ENCODE measurements at regions of chr20 and their contacts with region 1.

Region 1: DNA sequence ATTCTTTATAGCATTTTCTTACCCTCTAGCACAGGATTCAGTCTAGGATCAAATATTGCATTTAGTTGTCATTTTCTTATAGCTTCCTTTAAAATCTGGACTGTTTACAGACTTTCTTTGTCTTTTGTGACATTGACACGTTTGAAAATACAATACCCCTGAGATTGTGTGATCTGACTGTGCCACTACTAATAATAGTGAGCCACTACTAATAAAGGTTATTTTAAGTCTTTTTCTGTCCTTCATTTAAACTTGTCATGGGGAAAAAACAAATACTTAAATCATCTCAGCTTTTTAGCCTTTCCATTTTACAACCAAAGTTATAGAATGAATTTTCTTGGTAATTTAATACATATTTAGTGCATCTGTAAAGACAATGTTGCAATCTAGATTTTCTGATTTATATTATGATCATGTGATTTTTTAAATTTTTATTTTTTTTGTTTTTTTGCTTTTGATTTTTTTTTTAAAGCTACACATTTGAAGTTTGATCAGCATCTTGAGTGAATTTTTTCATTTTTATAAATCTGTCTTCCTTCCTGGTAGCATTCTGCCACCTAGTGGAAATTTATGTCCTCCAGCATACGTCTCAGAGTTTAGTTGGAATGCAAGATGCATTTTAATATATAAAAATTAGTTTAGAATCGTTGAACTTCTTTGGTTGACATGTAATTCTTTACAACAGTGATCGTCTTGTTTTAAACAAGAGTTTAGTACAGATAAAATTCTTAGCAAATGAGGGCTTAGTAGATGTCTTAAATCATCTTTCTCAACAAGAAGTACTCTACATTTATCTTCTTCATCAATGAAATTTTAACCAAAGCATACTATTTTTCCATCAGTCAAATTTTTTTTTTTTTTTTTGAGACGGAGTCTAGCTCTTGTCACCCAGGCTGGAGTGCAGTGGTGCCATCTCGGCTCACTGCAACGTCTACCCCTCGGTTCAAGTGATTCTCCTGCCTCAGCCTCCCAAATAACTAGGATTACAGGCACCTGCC is 119.4 kb downstream of the NCOA3 start:
- DNase-seq: peak; percentile 36
- H3K4me3 ChIP-seq: no peak overlapping the region
- H3K27ac ChIP-seq: no peak overlapping the region
- H3K4me1 ChIP-seq: no peaks in the 10 kb centered on the region
- H3K27me3 ChIP-seq: no peaks in the 10 kb centered on the region
- CTCF ChIP-seq: peak; percentile 78 to 85

Region 2: GRCh38 chr20:45993197-45993951 is 1627.7 kb before region 1 on chr20:
- CTCF ChIA-PET with region 1: no interaction called
- dilution Hi-C with region 1: no loop called
- in situ Hi-C with region 1: no loop called
- intact Hi-C with region 1: no loop called
- DNase-seq: peak; percentile 99
- H3K4me3 ChIP-seq: no peak overlapping the region
- H3K27ac ChIP-seq: peak overlapping the region; percentile 58
- H3K4me1 ChIP-seq: peaks cover 17% of the 10 kb centered on the region
- H3K27me3 ChIP-seq: no peaks in the 10 kb centered on the region
- CTCF ChIP-seq: no peak

Region 3: GRCh38 chr20:46752728-46753127 is 868.4 kb before region 1 on chr20:
- CTCF ChIA-PET with region 1: interaction called, 3 read pairs
- dilution Hi-C with region 1: no loop called
- in situ Hi-C with region 1: loop called (anchors 25 kb)
- intact Hi-C with region 1: loop called (anchors 1 kb)
- DNase-seq: peak; percentile 16
- H3K4me3 ChIP-seq: no peak overlapping the region
- H3K27ac ChIP-seq: no peak overlapping the region
- H3K4me1 ChIP-seq: peaks cover under 1% of the 10 kb centered on the region
- H3K27me3 ChIP-seq: no peaks in the 10 kb centered on the region
- CTCF ChIP-seq: peak; percentile 69 to 78

Region 4: DNA sequence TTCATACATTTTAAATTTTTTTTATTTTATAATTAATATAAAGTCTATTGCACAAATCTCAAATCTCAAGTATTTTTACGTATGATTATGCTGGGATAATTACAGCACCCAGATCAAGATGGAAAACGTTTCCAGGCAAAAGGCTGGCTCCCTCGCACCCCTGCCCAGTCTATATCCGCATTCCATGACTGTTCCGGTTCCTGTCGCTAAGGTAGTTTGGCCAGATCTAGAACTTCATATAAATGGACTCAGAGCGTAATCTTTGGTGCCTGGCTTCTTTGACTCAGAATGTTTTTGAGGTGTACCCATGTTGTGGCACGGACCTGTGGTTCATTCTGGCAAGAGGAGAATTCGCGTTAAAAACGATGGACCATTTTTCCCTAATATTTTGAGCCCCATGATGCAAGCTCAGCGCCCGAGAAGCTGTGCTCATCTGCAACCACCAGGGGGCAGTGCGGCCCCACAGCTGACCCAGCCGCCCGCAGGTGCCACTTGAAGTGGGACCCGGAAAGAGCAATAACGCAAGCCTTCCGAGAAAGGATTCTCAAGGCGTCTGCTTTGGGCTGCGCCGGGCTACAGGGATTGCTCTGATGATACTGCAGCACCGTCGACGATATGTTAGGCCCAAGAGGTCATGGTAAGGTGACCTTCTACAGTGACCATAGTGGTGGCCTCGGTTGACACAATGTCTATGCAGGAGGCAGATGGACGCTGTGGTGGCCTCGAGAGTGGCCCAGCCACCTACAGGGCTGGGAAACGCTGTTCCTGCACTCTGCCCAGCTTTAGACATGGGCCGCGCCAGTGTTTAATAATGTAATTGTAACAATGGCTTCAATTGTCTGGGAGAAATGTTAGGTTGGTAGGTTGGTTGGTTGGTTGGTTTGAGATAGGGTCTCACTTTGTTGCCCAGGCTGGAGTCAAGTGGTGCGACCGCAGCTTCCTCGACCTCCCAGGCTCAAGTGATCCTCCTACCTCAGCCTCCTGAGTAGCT is 424.7 kb before region 1 on chr20:
- CTCF ChIA-PET with region 1: no interaction called
- dilution Hi-C with region 1: no loop called
- in situ Hi-C with region 1: no loop called
- intact Hi-C with region 1: loop called (anchors 2 kb)
- DNase-seq: peak; percentile 47
- H3K4me3 ChIP-seq: no peak overlapping the region
- H3K27ac ChIP-seq: no peak overlapping the region
- H3K4me1 ChIP-seq: peaks cover 10% of the 10 kb centered on the region
- H3K27me3 ChIP-seq: no peaks in the 10 kb centered on the region
- CTCF ChIP-seq: peak; percentile 86 to 96

Region 5: DNA sequence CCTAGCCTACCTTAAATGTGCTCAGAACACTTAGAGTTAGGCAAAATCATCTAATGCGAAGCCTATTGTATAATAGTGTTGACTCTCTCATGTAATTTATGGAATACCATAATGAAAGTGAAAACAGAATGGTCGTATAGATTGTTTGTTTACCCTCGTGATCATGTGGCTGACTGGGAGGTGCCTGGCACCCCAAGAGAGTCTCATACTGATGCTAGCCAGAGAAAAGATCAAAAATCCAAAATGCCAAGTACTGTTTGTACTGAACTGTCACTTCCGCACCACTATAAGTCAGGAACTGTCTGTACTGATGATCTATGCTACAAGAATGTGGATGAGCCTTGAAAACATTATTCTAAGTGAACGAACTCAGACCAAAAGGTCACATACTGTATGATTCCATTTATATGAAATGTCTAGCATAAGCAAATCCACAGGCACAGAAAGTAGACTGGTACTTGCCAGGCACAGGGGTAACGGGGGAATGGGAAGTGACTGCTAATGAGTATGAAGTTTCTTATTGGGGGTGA is 287.0 kb before region 1 on chr20:
- CTCF ChIA-PET with region 1: no interaction called
- dilution Hi-C with region 1: no loop called
- in situ Hi-C with region 1: no loop called
- intact Hi-C with region 1: no loop called
- DNase-seq: peak; percentile 94
- H3K4me3 ChIP-seq: peak overlapping the region in 1 of 3 experiments; percentile 41
- H3K27ac ChIP-seq: peak overlapping the region; percentile 81
- H3K4me1 ChIP-seq: peaks cover 68% of the 10 kb centered on the region
- H3K27me3 ChIP-seq: no peaks in the 10 kb centered on the region
- CTCF ChIP-seq: no peak

Region 6: GRCh38 chr20:47392015-47392720 is 228.9 kb before region 1 on chr20:
- CTCF ChIA-PET with region 1: no interaction called
- dilution Hi-C with region 1: no loop called
- in situ Hi-C with region 1: loop called (anchors 10 to 25 kb)
- intact Hi-C with region 1: no loop called
- DNase-seq: peak; percentile 97
- H3K4me3 ChIP-seq: no peak overlapping the region
- H3K27ac ChIP-seq: peak overlapping the region; percentile 99
- H3K4me1 ChIP-seq: peaks cover 21% of the 10 kb centered on the region
- H3K27me3 ChIP-seq: no peaks in the 10 kb centered on the region
- CTCF ChIP-seq: no peak

Region 7: DNA sequence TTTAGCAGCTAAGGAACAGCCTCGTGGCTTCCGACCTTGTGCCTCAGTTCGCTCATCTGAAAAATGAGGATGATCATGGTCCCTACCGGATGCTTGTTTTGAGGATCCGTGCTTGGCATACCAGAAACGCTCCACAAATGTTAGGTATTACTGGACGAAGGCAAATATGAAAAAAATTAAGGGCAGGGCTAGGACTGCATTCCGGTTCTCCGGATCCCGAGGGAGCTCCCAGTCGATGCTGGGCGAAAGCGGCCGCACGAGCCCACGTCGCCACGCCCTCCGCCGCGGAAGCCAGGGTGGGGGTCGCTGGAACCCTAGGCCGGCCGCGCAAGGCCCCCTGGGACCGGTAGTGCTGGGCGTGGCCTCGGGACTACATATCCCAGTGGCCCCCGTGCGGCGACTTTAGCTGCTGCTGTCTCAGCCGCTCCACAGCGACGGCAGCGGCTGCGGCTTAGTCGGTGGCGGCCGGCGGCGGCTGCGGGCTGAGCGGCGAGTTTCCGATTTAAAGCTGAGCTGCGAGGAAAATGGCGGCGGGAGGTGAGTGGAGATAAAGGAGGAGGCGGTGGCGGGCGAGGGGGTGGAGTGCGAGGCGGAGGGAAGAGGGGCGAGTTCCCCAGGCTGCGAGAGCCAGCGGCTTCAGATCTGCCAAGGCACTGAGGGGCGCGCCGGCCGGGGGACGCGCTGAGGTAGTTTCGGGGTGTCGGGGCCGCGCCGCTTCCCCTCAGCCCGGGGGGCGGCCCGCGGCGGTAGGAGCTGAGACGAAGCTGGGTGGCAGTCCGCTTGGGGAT is 119.4 kb before region 1 on chr20 and contains the start of gene NCOA3:
- CTCF ChIA-PET with region 1: no interaction called
- dilution Hi-C with region 1: no loop called
- in situ Hi-C with region 1: no loop called
- intact Hi-C with region 1: loop called (anchors 2 kb)
- DNase-seq: peak; percentile 92
- H3K4me3 ChIP-seq: peak within 1 kb of the TSS; percentile 81 to 99 (median 96)
- H3K27ac ChIP-seq: peak within 1 kb of the TSS; percentile 66
- H3K4me1 ChIP-seq: peaks cover 13% of the 10 kb centered on the region
- H3K27me3 ChIP-seq: no peaks in the 10 kb centered on the region
- CTCF ChIP-seq: peak in 1 of 2 donors; percentile 62
- total RNA-seq, gene NCOA3: 26.7 to 29.6 TPM

Region 8: GRCh38 chr20:47725248-47725973 is 104.3 kb after region 1 on chr20:
- CTCF ChIA-PET with region 1: no interaction called
- dilution Hi-C with region 1: no loop called
- in situ Hi-C with region 1: no loop called
- intact Hi-C with region 1: no loop called
- DNase-seq: peak; percentile 76
- H3K4me3 ChIP-seq: no peak overlapping the region
- H3K27ac ChIP-seq: no peak overlapping the region
- H3K4me1 ChIP-seq: no peaks in the 10 kb centered on the region
- H3K27me3 ChIP-seq: no peaks in the 10 kb centered on the region
- CTCF ChIP-seq: peak; percentile 92 to 95